Activated CD8-positive, alpha-beta memory T cell treated with anti-CD3 and anti-CD28 coated beads, Interleukin-2, amount 10 ng/mL, durations not matched to agents 7 days and 5 days (primary cell): ENCODE measurements at regions of chr4 and their contacts with region 1.

Region 1: GRCh38 chr4:78059524-78059889 is 2.4 kb downstream of the FRAS1 start:
- DNase-seq: peak; percentile 46
- ATAC-seq: no peak
- H3K4me3 Mint-ChIP-seq: peak overlapping the region; percentile 34
- H3K27ac Mint-ChIP-seq: no peak overlapping the region
- H3K4me1 Mint-ChIP-seq: peaks cover 25% of the 10 kb centered on the region
- H3K27me3 Mint-ChIP-seq: peaks cover 79% of the 10 kb centered on the region

Region 2: DNA sequence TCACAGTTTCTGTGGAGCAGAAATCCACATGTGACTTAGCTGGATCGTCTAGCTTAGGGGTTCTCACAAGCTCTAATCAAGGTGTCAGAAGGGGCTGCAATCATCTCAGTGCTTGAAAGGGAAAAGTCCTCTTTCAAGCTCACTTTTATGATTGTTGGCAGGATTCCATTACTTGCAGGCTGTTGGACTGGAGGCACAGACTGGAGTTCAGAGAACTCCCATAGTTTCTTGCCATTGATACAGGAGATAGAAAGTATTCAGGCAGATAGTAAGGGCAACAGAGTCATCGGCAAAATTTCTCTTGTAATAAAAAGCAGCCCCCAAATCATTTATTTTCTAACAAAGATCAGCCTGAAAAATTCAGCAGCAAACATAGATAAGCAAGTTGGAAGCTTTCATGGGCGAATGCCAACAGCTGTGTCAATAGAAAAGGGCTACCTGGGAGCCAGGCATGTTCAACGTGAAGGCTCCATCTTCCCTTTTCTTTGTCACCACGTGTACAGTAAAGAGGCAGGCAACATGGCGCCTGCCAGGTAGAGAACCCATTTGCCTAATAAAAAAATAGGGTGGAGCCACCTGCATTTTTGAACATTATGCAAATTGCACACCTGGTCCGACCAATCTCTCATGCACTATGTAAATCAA is 389.4 kb before region 1 on chr4:
- CTCF ChIA-PET with region 1: no interaction called
- DNase-seq: no peak
- ATAC-seq: no peak
- H3K4me3 Mint-ChIP-seq: no peak overlapping the region
- H3K27ac Mint-ChIP-seq: no peak overlapping the region
- H3K4me1 Mint-ChIP-seq: no peaks in the 10 kb centered on the region
- H3K27me3 Mint-ChIP-seq: no peaks in the 10 kb centered on the region

Region 3: GRCh38 chr4:78047366-78047765 is 12.1 kb before region 1 on chr4:
- CTCF ChIA-PET with region 1: interaction called, 17 read pairs
- DNase-seq: no peak
- ATAC-seq: no peak
- H3K4me3 Mint-ChIP-seq: no peak overlapping the region
- H3K27ac Mint-ChIP-seq: no peak overlapping the region
- H3K4me1 Mint-ChIP-seq: no peaks in the 10 kb centered on the region
- H3K27me3 Mint-ChIP-seq: peaks cover 26% of the 10 kb centered on the region